Activated T-helper 2 cell treated with anti-CD3 and anti-CD28 coated beads, Interferon-gamma antibody, Interleukin-2, Interleukin-4, amounts not matched to agents 10 μg/mL and 5 μg/mL and 100 μg/mL, durations not matched to agents 14 hours and 24 hours and 36 hours (primary cell): ENCODE measurements at regions of chr1 and their contacts with region 1.

Region 1: DNA sequence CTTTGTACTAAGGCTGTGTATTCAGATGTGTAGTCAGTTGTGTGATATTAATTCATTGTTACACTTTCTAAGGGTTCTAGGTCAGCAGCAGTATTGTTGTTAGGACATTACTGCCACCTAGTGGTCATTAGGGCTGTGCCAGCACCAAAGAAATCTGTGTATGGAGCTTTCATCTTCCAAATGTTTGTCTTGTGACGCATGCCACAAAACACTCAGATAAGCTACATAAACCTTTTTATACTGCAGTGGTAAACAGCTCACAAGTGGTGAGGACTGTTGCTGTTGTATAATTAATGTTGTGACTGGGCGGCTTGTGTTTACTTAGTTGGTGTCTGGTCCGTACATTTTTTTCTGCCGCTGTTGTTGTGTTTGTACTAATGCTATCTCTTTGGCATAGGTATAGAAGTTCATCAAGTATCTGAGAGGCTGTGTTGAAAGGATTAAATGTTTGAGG is 51.7 kb downstream of the S1PR1 start:
- DNase-seq: peak; percentile 62
- H3K4me3 Mint-ChIP-seq: no peak overlapping the region
- H3K27ac Mint-ChIP-seq: no peak overlapping the region
- H3K4me1 Mint-ChIP-seq: peaks cover 70% of the 10 kb centered on the region
- H3K27me3 Mint-ChIP-seq: no peaks in the 10 kb centered on the region

Region 2: DNA sequence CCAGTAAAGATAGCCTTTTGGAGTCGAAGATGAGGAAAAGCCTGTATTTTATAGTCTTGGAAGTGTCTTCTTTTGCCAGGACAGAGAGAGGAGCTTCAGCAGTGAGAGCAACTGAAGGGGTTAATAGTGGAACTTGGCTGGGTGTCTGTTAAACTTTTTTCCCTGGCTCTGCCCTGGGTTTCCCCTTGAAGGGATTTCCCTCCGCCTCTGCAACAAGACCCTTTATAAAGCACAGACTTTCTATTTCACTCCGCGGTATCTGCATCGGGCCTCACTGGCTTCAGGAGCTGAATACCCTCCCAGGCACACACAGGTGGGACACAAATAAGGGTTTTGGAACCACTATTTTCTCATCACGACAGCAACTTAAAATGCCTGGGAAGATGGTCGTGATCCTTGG is 569.0 kb before region 1 on chr1 and contains the start of gene VCAM1:
- intact Hi-C with region 1: loop called (anchors 10 kb)
- DNase-seq: no peak
- H3K4me3 Mint-ChIP-seq: no peak within 1 kb of the TSS
- H3K27ac Mint-ChIP-seq: no peak within 1 kb of the TSS
- H3K4me1 Mint-ChIP-seq: peaks cover 4% of the 10 kb centered on the region
- H3K27me3 Mint-ChIP-seq: peaks cover 17% of the 10 kb centered on the region
- total RNA-seq, gene VCAM1: 0.05 TPM in 1 of 2 replicates, not detected in the other

Region 3: DNA sequence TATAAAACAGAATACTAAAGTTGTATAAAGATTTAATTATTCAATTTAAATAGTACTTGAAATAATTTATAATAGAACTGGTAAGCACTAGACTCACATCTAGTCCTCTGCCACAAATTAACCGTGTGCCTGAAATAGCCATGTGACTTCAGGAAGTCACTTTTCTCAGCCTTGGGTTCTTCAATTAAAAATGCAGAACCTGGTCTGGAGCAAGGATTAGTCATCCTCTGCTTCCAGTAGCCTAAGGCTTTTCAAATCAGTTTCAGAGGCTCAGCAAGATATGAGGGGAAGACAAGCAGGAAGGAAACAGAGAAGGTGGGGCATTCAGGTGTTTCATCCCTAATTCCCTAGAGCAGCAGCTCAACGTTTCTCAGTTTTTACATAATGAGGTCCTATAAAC is 286.0 kb before region 1 on chr1:
- intact Hi-C with region 1: loop called (anchors 1 kb)
- DNase-seq: no peak
- H3K4me3 Mint-ChIP-seq: no peak overlapping the region
- H3K27ac Mint-ChIP-seq: no peak overlapping the region
- H3K4me1 Mint-ChIP-seq: peaks cover 32% of the 10 kb centered on the region
- H3K27me3 Mint-ChIP-seq: no peaks in the 10 kb centered on the region

Region 4: GRCh38 chr1:101122452-101123166 is 165.9 kb before region 1 on chr1:
- intact Hi-C with region 1: loop called (anchors 5 kb)
- DNase-seq: no peak
- H3K4me3 Mint-ChIP-seq: no peak overlapping the region
- H3K27ac Mint-ChIP-seq: peak overlapping the region; percentile 73
- H3K4me1 Mint-ChIP-seq: peaks cover 60% of the 10 kb centered on the region
- H3K27me3 Mint-ChIP-seq: no peaks in the 10 kb centered on the region

Region 5: GRCh38 chr1:101198842-101199636 is 89.5 kb before region 1 on chr1:
- intact Hi-C with region 1: loop called (anchors 1 kb)
- DNase-seq: peak; percentile 51
- H3K4me3 Mint-ChIP-seq: peak overlapping the region; percentile 7
- H3K27ac Mint-ChIP-seq: peak overlapping the region; percentile 85
- H3K4me1 Mint-ChIP-seq: peaks cover 40% of the 10 kb centered on the region
- H3K27me3 Mint-ChIP-seq: no peaks in the 10 kb centered on the region

Region 6: DNA sequence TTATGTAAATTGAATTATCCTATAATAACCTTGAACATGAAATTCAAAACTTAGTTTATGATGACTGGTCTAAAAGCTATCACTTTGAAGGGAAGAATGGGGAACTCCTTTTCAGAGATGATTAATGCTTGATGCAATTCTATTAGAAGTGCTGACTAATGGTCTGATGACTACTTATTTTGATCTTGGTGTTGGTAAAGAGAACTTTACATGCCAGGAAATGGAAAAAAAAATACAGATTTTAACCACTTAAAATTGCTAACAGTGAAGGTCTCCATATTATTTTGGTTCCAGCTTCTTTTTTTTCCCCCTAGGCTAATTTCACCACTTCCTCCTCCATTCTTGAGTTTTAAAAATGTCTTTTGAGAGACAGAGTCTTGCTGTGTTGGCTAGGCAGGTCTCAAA is 28.8 kb before region 1 on chr1:
- intact Hi-C with region 1: loop called (anchors 1 kb)
- DNase-seq: no peak
- H3K4me3 Mint-ChIP-seq: no peak overlapping the region
- H3K27ac Mint-ChIP-seq: peak overlapping the region; percentile 39
- H3K4me1 Mint-ChIP-seq: peaks cover 54% of the 10 kb centered on the region
- H3K27me3 Mint-ChIP-seq: no peaks in the 10 kb centered on the region

Region 7: DNA sequence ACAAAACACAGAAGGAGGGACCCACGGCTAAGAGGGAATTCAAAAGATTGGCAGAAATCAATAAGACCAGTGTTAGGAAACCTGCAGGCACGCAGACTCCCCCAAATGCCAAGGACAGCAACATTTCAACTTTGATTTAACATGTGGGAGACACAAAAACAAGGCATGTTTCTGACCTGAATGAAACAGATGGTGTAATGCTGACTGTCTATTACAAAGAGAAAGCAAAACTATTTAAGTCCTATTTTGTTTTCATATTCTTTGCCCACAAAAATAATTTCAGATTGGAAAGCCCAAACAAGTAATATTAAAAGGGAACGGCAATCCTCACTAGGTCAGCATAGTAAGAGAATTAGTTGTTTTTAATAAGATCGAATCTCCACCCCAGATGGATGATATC is 56.2 kb after region 1 on chr1:
- intact Hi-C with region 1: no loop called
- DNase-seq: no peak
- H3K4me3 Mint-ChIP-seq: no peak overlapping the region
- H3K27ac Mint-ChIP-seq: no peak overlapping the region
- H3K4me1 Mint-ChIP-seq: peaks cover 32% of the 10 kb centered on the region
- H3K27me3 Mint-ChIP-seq: peaks cover 27% of the 10 kb centered on the region

Region 8: GRCh38 chr1:101451888-101452287 is 163.4 kb after region 1 on chr1:
- intact Hi-C with region 1: loop called (anchors 1 kb)
- DNase-seq: no peak
- H3K4me3 Mint-ChIP-seq: no peak overlapping the region
- H3K27ac Mint-ChIP-seq: no peak overlapping the region
- H3K4me1 Mint-ChIP-seq: peaks cover 33% of the 10 kb centered on the region
- H3K27me3 Mint-ChIP-seq: peaks cover 26% of the 10 kb centered on the region